ENCODE measurements at regions of chr19 and their contacts with region 1.

Region 1: GRCh38 chr19:47112997-47113849 is at the start of gene ZC3H4:
- DNase-seq: peak; percentile 99
- ATAC-seq: peak; percentile 88
- H3K4me3 Mint-ChIP-seq: peak within 1 kb of the TSS; percentile 89
- H3K27ac Mint-ChIP-seq: peak within 1 kb of the TSS; percentile 99
- H3K4me1 Mint-ChIP-seq: peaks cover 24% of the 10 kb centered on the region
- H3K27me3 Mint-ChIP-seq: no peaks in the 10 kb centered on the region
- CTCF ChIP-seq: no peak
- total RNA-seq, gene ZC3H4: 68.5 to 70.2 TPM

Region 2: DNA sequence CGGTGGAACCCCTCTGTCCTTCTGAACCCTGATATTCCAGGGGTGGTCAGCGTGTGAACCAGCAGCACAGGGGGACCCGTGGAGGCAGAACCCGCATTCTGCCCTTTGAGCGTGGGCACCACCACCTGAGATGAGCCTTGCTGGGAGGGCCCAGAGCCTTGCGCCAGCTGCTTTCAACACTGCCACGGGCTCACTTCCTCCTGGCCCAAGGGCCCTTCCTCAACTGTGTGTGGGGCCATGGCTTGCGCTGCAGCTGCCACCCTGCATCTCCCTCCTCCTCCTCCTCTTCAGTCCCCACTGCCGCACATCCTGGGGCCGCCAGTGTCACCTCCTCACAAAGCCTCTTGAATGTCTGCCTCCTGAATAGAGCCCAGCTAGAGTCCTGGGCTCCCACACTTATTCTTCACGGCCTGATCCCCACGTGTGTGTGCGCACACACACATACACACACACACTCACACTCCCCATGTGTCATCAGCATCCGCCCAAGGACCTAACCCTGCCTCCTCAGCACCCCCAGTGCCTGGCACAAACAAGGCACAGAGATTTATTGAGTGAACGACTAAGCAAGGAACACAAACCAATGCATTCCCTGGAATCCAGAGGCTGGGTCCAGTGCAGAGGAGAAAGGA is 37.9 kb before region 1 on chr19:
- CTCF ChIA-PET with region 1: interaction called, 23 read pairs
- POLR2A ChIA-PET with region 1: interaction called, 4 read pairs
- intact Hi-C with region 1: no loop called
- DNase-seq: no peak
- ATAC-seq: no peak
- H3K4me3 Mint-ChIP-seq: no peak overlapping the region
- H3K27ac Mint-ChIP-seq: no peak overlapping the region
- H3K4me1 Mint-ChIP-seq: peaks cover 4% of the 10 kb centered on the region
- H3K27me3 Mint-ChIP-seq: no peaks in the 10 kb centered on the region
- CTCF ChIP-seq: no peak

Region 3: GRCh38 chr19:47081111-47081510 is 32.1 kb before region 1 on chr19:
- CTCF ChIA-PET with region 1: interaction called, 23 read pairs
- POLR2A ChIA-PET with region 1: interaction called, 4 read pairs
- intact Hi-C with region 1: no loop called
- DNase-seq: no peak
- ATAC-seq: no peak
- H3K4me3 Mint-ChIP-seq: no peak overlapping the region
- H3K27ac Mint-ChIP-seq: peak overlapping the region; percentile 25
- H3K4me1 Mint-ChIP-seq: no peaks in the 10 kb centered on the region
- H3K27me3 Mint-ChIP-seq: no peaks in the 10 kb centered on the region
- CTCF ChIP-seq: no peak

Region 4: DNA sequence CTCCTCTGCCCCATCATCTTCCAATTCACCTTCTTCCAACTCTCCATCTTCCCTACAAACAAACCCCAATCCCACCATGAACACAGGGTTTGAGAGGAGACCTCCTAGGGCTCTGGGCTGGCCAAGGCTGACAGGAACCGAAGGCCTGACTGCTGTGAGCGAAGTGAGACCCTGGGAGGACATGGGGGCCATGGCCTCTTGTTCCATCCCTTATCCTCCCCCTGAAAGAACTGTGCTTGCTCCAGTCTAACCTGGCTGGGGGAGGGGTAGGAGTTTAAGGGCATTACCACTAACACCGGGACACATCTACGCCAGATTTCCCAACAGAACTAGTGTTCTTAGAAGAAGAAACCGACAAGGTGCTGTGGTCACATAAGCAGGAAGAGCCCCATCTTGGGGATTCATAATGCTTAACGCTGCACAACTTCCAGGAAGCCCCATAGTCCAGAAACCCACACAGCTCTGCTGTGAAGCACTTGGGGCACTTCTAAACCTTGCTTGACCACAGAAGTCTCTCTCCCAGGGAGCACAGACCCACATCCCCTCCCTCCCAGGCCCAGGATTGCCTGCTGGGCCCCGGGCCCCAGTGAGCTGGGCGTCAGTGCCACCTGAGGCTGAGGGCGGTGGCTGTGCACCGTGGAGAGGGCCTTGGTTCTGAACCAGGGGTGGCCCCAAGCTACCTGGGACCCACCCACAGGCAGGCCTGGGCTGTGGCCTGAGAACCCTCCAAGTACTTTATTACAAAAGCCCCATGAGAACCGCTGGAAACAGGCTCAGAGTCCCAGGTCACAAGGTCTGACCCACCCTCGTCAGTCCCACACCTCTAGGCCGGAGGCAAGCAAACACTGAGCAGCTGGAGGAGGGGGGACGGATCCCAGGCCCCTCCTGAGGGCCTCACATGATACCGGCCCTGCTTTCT is 18.4 kb before region 1 on chr19:
- CTCF ChIA-PET with region 1: interaction called, 6 read pairs
- POLR2A ChIA-PET with region 1: interaction called, 182 read pairs
- intact Hi-C with region 1: loop called (anchors 2 kb)
- DNase-seq: peak; percentile 66
- ATAC-seq: peak; percentile 71
- H3K4me3 Mint-ChIP-seq: peak overlapping the region; percentile 63
- H3K27ac Mint-ChIP-seq: peak overlapping the region; percentile 96
- H3K4me1 Mint-ChIP-seq: peaks cover 60% of the 10 kb centered on the region
- H3K27me3 Mint-ChIP-seq: no peaks in the 10 kb centered on the region
- CTCF ChIP-seq: no peak

Region 5: DNA sequence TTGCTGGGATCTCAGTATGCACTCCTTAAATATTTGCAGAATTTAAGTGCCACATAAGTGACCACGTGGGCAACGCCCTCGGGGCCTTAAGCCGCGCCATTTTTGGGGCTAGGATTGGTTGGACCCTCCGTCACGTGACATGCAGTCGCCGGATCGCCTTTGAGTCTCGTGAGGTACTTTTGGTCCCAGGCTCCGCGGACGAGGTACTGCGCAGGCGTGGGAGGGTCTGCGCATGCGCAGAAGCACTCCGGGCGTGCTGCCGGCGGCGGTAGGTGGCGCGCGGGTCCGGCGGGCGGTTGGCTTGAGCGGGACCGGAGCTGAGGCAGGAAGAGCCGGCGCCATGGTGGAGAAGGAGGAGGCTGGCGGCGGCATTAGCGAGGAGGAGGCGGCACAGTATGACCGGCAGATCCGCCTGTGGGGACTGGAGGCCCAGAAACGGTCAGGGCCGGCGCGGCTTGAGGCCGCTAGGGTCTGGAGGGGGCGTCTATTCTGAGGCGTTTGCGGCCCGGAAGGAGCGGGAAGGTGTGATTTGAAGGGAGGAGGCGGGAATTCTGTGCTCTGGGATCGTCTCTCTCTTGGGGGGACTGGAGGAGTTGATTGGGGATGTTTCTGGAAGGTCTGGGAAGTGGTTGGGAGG is 17.5 kb after region 1 on chr19 and contains the start of gene SAE1:
- CTCF ChIA-PET with region 1: interaction called, 11 read pairs
- POLR2A ChIA-PET with region 1: interaction called, 22 read pairs
- intact Hi-C with region 1: no loop called
- DNase-seq: peak; percentile 93
- ATAC-seq: peak; percentile 91
- H3K4me3 Mint-ChIP-seq: peak within 1 kb of the TSS; percentile 100
- H3K27ac Mint-ChIP-seq: peak within 1 kb of the TSS; percentile 100
- H3K4me1 Mint-ChIP-seq: peaks cover 37% of the 10 kb centered on the region
- H3K27me3 Mint-ChIP-seq: peaks cover 2% of the 10 kb centered on the region
- CTCF ChIP-seq: peak; percentile 51
- total RNA-seq, gene SAE1: 125 to 127 TPM

Region 6: DNA sequence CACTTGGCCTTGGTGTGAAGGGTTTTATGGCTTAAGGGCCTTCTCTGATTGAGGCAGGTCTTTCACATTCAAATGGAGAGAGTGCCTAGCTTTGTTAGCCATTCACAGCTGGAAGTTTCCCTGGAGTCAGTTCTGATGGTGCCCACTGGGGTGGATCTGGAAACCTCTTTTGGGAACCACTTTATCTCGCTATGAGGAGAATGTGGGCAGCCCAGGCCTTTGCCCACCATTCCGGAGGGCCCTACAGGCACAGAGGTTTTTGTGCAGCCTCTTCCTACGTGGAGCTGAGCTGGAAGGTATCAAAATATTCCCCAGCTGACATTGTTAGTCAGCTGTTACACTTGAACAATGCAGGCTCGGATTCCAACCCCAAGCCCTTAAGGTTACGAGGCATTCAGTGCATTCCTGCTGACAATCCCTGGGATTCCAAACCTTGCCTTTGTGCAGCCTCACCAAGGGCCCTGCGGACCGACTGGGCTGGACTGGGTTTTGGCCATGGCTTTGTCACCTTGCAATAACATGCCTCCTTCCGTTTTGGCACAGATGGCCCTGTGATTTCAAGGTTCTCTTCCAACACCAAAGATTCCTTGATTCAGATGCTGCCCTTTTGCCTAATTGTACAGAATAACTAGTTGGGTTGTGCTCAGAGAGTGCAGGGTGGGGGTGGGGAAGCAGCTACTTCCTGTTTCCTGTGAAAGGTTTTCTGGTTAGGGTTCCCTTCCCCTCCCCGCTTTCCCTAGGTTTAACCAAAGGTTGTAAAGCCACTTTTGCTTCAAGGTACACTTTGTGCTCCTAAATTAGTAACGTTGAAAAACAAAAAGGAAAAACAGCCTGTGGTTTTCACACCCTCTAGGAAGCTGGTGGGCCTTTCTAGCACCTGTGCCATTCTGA is 44.5 kb after region 1 on chr19:
- CTCF ChIA-PET with region 1: no interaction called
- POLR2A ChIA-PET with region 1: interaction called, 16 read pairs
- intact Hi-C with region 1: no loop called
- DNase-seq: peak; percentile 60
- ATAC-seq: peak; percentile 18
- H3K4me3 Mint-ChIP-seq: peak overlapping the region; percentile 40
- H3K27ac Mint-ChIP-seq: peak overlapping the region; percentile 86
- H3K4me1 Mint-ChIP-seq: peaks cover 65% of the 10 kb centered on the region
- H3K27me3 Mint-ChIP-seq: no peaks in the 10 kb centered on the region
- CTCF ChIP-seq: no peak

Region 7: GRCh38 chr19:47256688-47257443 is 143.6 kb after region 1 on chr19:
- CTCF ChIA-PET with region 1: interaction called, 4 read pairs
- POLR2A ChIA-PET with region 1: interaction called, 10 read pairs
- intact Hi-C with region 1: no loop called
- DNase-seq: peak; percentile 100
- ATAC-seq: peak; percentile 83
- H3K4me3 Mint-ChIP-seq: peak overlapping the region; percentile 84
- H3K27ac Mint-ChIP-seq: peak overlapping the region; percentile 98
- H3K4me1 Mint-ChIP-seq: peaks cover 36% of the 10 kb centered on the region
- H3K27me3 Mint-ChIP-seq: no peaks in the 10 kb centered on the region
- CTCF ChIP-seq: no peak